ENCODE measurements at regions of chr7 and their contacts with region 1.

Region 1: GRCh38 chr7:88191911-88192310 is 27.9 kb downstream of the SRI start:
- DNase-seq: no peak
- H3K4me3 ChIP-seq: no peak overlapping the region
- H3K27ac ChIP-seq: no peak overlapping the region
- H3K4me1 ChIP-seq: no peaks in the 10 kb centered on the region
- H3K27me3 ChIP-seq: no peaks in the 10 kb centered on the region
- CTCF ChIP-seq: no peak
- POLR2A ChIP-seq: no peak

Region 2: DNA sequence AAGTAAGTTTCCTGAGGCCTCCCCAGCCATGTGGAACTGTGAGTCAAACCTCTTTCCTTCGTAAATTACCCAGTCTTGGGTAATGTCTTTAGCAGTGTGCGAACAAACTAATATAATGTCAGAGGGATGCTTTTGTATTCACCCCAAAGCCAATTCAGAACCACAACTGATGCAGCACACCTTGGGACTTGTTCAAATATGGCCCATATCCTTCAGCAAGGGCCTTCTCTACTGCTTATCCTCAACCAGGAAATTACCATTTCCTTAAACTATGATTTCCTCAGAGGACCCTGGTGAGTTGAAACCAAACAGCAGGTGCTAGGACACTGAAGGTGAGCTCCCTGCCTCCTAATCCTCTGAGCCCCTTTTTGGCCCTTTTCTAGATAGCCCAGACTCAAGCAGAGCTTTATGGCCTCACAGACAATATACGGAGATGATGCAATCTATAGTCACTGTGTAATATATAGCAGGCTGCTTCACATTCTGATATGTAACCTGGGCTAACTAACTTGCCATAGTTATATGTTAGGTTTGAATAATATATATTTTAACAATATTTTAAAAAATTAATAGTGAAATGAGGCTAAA is 12.7 kb after region 1 on chr7:
- CTCF ChIA-PET with region 1: interaction called, 15 read pairs
- POLR2A ChIA-PET with region 1: no interaction called
- dilution Hi-C with region 1: no loop called
- intact Hi-C with region 1: no loop called
- DNase-seq: no peak
- H3K4me3 ChIP-seq: no peak overlapping the region
- H3K27ac ChIP-seq: no peak overlapping the region
- H3K4me1 ChIP-seq: no peaks in the 10 kb centered on the region
- H3K27me3 ChIP-seq: no peaks in the 10 kb centered on the region
- CTCF ChIP-seq: no peak
- POLR2A ChIP-seq: no peak

Measured in endothelial cell of umbilical vein (primary cell).